GM10248 (cell line): ENCODE measurements at regions of chr16 and their contacts with region 1.

Region 1: GRCh38 chr16:84277237-84277823 is 17.3 kb upstream of the WFDC1 start:
- DNase-seq: peak; percentile 72
- CTCF ChIP-seq: peak; percentile 90

Region 2: DNA sequence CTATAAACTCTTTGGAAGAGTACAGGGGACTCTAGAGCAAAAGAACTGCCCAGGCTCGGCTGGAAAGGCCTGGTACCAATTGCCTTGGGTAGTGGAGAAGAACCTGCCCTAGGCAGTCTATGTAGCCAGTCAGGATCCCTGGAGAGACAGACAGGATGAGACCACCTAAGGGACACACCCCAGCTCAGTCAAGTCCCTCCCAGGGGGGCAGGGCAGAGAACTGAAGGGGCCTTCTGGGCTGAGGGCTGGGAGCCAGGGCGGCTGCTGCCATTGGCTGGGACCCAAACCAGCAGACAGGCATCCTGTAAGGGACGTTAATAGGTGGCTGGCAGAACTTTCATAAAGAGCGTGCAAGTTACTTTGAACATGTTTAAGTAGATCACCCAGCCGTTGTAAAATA is 222.0 kb before region 1 on chr16:
- CTCF ChIA-PET with region 1: no interaction called
- POLR2A ChIA-PET with region 1: no interaction called
- DNase-seq: no peak
- CTCF ChIP-seq: no peak

Region 3: GRCh38 chr16:84266451-84266850 is 10.9 kb before region 1 on chr16:
- CTCF ChIA-PET with region 1: interaction called, 31 read pairs
- POLR2A ChIA-PET with region 1: no interaction called
- DNase-seq: no peak
- CTCF ChIP-seq: no peak

Region 4: GRCh38 chr16:84332975-84333684 is 55.8 kb after region 1 on chr16:
- CTCF ChIA-PET with region 1: no interaction called
- POLR2A ChIA-PET with region 1: no interaction called
- DNase-seq: no peak
- CTCF ChIP-seq: no peak